Colonic mucosa (tissue), 4 donors: ENCODE measurements at regions of chr14 and their contacts with region 1.

Region 1: GRCh38 chr14:80954687-80955299 is 628 bp upstream of the TSHR start:
- DNase-seq: peak; percentile 82
- H3K4me3 ChIP-seq: peak overlapping the region; percentile 50
- H3K27ac ChIP-seq: no peak overlapping the region
- H3K4me1 ChIP-seq: no peaks in the 10 kb centered on the region
- H3K27me3 ChIP-seq: peaks cover 7% of the 10 kb centered on the region
- CTCF ChIP-seq: peak; percentile 76

Region 2: DNA sequence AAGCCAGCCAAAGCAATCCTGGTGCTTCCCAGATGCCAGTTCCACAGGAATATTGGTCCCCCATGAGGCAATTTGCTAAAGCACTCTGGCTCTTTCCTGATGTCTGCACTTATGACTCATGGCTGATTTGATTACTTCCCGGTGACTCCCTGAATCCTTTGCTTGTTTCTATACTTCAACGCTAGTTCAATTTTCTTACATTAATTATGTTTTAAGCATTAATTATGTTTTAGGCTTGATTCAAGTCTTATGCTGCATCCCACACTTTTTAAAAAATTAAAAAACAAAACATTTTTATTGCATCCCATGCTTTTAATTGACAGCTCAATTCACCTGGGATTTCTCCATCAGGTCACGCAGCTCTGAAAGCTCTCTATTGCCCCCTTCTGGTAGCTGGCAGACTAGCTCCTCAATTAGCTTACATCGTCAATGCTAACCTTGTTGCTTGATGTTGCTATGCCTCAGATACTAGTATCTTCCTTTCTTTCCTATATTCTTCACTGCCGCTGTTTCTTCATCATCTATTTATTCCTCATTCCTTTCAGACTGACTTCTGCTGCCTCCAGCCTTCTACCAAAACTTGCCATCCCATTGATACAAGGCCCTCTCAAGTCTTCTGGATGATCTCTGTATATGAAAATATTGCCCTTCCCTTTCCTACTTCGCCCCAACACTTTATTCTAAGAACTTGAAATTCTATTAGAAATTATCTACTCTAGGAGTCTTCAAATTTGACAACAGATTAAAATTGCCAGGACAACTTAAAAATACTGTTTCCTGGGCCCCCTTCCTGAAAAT is 32.6 kb after region 1 on chr14:
- intact Hi-C with region 1: loop called (anchors 5 kb)
- DNase-seq: peak; percentile 78
- H3K4me3 ChIP-seq: no peak overlapping the region
- H3K27ac ChIP-seq: peak overlapping the region; percentile 35
- H3K4me1 ChIP-seq: no peaks in the 10 kb centered on the region
- H3K27me3 ChIP-seq: no peaks in the 10 kb centered on the region
- CTCF ChIP-seq: peak; percentile 92